ENCODE measurements at regions of chr2 and their contacts with region 1.

Region 1: GRCh38 chr2:197131558-197131855 is 179.1 kb downstream of the ANKRD44 start:
- DNase-seq: no peak
- H3K4me3 ChIP-seq: no peak overlapping the region
- H3K27ac ChIP-seq: no peak overlapping the region
- H3K4me1 ChIP-seq: 0 out of 7 replicates have a peak, but pooled peaks cover 0 to 3% (median 0%) of the 10 kb centered on the region in 4 experiments
- H3K27me3 ChIP-seq: no peaks in the 10 kb centered on the region
- CTCF ChIP-seq: no peak
- EP300 ChIP-seq: no peak
- POLR2A ChIP-seq: no peak
- RAD21 ChIP-seq: no peak

Region 2: GRCh38 chr2:196954001-196954400 is 177.5 kb before region 1 on chr2:
- CTCF ChIA-PET with region 1: no interaction called
- POLR2A ChIA-PET with region 1: no interaction called
- DNase-seq: no peak
- H3K4me3 ChIP-seq: no peak overlapping the region
- H3K27ac ChIP-seq: no peak overlapping the region
- H3K4me1 ChIP-seq: peaks cover 2 to 12% (median 7%) of the 10 kb centered on the region in 4 experiments; a peak in 3 of 7 replicates
- H3K27me3 ChIP-seq: no peaks in the 10 kb centered on the region
- CTCF ChIP-seq: no peak
- EP300 ChIP-seq: no peak
- POLR2A ChIP-seq: no peak
- RAD21 ChIP-seq: no peak

Region 3: DNA sequence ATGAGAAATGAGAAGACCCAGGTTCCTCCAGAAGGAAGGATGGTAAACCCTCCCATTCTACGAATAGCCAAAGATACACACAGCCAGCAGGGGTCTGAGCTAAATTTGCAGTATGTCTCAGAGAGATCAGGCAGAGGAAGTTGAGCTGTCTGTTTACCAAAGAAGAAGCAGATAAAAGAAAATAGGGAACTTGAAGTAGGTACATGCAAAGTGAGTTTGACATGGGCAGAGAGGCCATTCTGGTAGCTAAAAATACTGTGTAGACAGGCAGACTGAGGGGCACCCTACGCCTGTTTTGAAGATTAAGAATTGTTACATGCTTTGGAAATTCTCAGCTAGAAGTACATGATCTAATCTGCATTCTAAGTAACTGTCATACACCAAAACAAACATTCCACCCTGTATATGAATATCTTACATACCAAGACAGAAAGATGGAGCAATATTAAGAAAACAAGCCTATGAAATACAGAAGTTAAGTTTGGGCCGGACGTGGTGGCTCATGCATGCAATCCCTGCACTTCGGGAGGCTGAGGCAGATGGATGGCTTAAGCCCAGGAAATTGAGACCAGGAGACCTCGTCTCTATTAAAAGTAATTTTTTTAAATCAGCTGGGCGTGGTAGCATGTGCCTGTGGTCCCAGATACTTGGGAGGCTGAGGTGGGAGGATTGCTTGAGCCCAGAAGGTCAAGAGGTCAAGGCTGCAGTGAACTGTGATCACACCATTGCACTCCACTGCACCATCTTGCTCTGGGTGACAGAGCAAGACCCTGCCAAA is 21.1 kb after region 1 on chr2:
- CTCF ChIA-PET with region 1: interaction called, 16 read pairs
- POLR2A ChIA-PET with region 1: no interaction called
- DNase-seq: no peak
- H3K4me3 ChIP-seq: no peak overlapping the region
- H3K27ac ChIP-seq: no peak overlapping the region
- H3K4me1 ChIP-seq: peaks cover 0 to 3% (median 1%) of the 10 kb centered on the region in 4 experiments; a peak in 3 of 7 replicates
- H3K27me3 ChIP-seq: no peaks in the 10 kb centered on the region
- CTCF ChIP-seq: no peak
- EP300 ChIP-seq: no peak
- POLR2A ChIP-seq: no peak
- RAD21 ChIP-seq: no peak